Activated CD8-positive, alpha-beta memory T cell treated with anti-CD3 and anti-CD28 coated beads, Interleukin-2, amount 10 ng/mL, durations not matched to agents 7 days and 5 days (primary cell): ENCODE measurements at regions of chr1 and their contacts with region 1.

Region 1: GRCh38 chr1:5992026-5992813 is at the start of gene NPHP4:
- DNase-seq: peak; percentile 100
- ATAC-seq: peak; percentile 92
- H3K4me3 Mint-ChIP-seq: peak within 1 kb of the TSS; percentile 99
- H3K27ac Mint-ChIP-seq: peak within 1 kb of the TSS; percentile 90
- H3K4me1 Mint-ChIP-seq: peaks cover 27% of the 10 kb centered on the region
- H3K27me3 Mint-ChIP-seq: no peaks in the 10 kb centered on the region
- total RNA-seq, gene NPHP4: 15.4 to 20.3 TPM

Region 2: DNA sequence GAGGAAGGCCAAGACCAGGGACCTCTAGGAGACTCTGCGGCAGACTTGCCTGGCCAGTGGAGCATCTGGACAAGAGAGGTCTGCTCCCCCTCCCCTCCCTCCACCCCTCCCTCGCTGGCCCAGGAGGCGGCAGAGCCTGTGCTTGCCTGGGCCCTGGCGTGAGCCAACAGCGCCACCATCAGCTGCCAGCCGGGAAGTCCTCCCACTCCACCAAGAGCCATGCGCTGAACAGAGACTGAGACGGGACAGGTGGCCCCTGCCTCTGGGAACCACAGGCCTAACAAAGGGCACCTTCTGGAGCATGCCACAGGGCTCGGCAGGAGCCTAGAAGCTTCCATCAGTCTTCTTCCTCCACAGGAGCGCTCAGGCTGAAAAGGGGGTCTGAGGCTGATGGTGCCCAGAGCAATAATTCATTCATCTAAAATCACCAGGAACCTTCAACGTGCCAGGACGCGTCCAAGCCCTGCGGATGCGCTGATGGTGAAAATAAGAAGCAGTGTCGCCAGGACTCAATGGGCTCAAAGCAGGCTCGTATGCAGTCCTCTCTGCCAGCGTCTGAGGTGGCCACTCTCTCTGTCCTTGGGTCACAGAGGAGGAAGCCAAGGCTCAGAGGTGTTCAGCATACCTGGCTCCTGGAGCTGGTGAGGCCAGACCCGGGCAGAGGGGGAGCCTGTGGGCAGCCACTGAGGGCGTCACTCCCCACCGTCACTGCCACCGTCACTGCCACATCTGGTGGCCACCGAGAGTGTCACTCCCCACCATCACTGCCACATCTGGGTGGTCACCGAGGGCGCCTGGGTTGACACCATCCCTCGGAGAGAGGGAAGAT is 161.2 kb before region 1 on chr1:
- CTCF ChIA-PET with region 1: no interaction called
- DNase-seq: no peak
- ATAC-seq: no peak
- H3K4me3 Mint-ChIP-seq: no peak overlapping the region
- H3K27ac Mint-ChIP-seq: no peak overlapping the region
- H3K4me1 Mint-ChIP-seq: no peaks in the 10 kb centered on the region
- H3K27me3 Mint-ChIP-seq: no peaks in the 10 kb centered on the region

Region 3: DNA sequence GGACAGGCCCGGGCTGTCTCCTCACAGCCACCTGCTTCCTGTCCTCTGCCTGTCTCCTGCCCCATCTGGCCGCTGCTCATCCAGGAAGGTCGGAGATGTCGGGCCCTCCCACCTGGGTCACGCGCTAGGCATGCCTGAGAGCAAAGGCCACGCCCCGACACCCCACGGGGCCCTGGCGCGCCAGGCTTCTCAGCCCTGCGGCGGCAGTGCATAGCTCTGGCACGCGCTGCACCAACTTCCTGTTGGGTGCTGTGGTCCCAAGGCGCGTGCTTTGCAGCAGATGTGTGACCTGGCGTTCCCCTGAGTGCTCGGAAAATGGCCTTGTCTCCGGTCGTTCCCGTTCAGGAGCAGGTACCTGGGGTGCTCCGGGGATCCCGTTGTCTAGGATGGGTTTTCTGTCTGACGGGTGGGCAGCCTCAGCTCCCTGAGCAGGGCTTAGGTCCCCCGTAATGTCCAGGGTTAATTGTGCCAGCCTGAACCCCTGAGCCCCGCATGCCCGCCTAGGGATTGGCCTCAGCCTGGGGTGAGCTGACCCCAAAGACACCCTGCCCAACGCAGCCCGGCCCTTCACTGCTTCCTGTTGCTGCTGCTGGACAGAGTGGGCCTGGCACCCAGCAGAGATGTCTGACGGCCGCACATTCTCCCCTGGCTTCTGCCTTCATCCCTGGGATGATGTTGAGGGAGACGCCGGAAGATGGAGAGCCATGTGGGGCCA is 34.0 kb after region 1 on chr1:
- CTCF ChIA-PET with region 1: interaction called, 16 read pairs
- DNase-seq: peak; percentile 98
- ATAC-seq: peak; percentile 83
- H3K4me3 Mint-ChIP-seq: peak overlapping the region; percentile 83
- H3K27ac Mint-ChIP-seq: peak overlapping the region; percentile 98
- H3K4me1 Mint-ChIP-seq: peaks cover 50% of the 10 kb centered on the region
- H3K27me3 Mint-ChIP-seq: no peaks in the 10 kb centered on the region